ENCODE measurements at regions of chr16 and their contacts with region 1.

Region 1: GRCh38 chr16:58487566-58488351 is 12.2 kb upstream of the NDRG4 start:
- DNase-seq: peak; percentile 81
- H3K4me3 Mint-ChIP-seq: no peak overlapping the region
- H3K27ac Mint-ChIP-seq: no peak overlapping the region
- H3K4me1 Mint-ChIP-seq: no peaks in the 10 kb centered on the region
- H3K27me3 Mint-ChIP-seq: peaks cover 37% of the 10 kb centered on the region

Region 2: DNA sequence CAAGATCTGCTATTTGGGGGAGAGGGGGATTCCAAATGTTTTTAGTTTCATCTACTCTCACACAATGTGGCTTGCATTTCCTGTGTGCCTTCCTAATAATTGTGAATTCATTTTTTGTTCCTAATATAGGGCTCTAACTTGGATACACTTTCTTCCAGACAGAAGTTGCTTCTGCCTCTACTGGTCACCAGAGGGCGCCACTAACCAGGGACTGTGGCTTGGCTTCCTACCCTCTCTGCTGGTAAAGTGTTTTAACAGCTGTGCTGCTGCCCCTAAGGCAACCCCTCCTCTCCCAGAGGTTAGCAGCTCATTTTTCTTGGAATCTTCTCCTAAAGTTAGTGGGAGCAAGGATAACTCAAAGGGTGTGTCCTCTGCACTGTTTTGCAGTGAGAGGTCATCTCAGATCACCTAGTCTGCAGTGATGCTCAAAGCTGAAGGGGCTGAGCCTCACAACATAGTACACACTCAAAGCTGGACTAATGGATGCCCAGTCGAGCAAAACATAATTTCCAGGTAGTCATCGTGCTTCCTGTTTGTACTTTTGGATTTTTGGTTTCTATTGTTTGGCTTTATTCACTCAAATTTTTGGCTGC is 187.9 kb before region 1 on chr16:
- CTCF ChIA-PET with region 1: interaction called, 15 read pairs
- DNase-seq: peak; percentile 55
- H3K4me3 Mint-ChIP-seq: no peak overlapping the region
- H3K27ac Mint-ChIP-seq: no peak overlapping the region
- H3K4me1 Mint-ChIP-seq: no peaks in the 10 kb centered on the region
- H3K27me3 Mint-ChIP-seq: peaks cover 1% of the 10 kb centered on the region

Region 3: GRCh38 chr16:58336332-58337089 is 151.2 kb before region 1 on chr16:
- CTCF ChIA-PET with region 1: interaction called, 153 read pairs
- DNase-seq: peak; percentile 90
- H3K4me3 Mint-ChIP-seq: peak overlapping the region; percentile 22
- H3K27ac Mint-ChIP-seq: no peak overlapping the region
- H3K4me1 Mint-ChIP-seq: peaks cover 7% of the 10 kb centered on the region
- H3K27me3 Mint-ChIP-seq: peaks cover 4% of the 10 kb centered on the region

Measured in activated naive CD4-positive, alpha-beta T cell treated with anti-CD3 and anti-CD28 coated beads, Interleukin-2, amount 10 ng/mL, durations not matched to agents 7 days and 5 days (primary cell).